Activated B cell treated with CpG ODN at 0.5 μM for 24 hours (primary cell): ENCODE measurements at regions of chr15 and their contacts with region 1.

Region 1: DNA sequence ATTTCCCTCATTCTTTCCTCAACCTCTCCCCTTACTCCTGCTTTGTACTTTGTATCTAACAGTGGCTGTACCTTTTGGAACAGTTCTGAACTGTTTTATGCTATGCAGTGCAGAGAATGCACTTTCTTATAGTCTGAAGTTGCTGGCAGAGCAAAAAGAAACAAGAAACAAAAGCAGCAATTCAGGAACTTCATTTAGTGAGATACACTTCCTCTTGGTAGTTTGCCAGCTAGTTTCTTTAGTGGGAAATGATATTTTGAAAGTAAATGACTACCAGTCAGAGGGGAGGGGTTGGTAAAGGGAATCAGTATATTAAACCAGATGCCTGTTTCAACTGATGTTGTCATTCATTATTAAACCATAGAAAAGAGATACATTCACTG is 55.0 kb upstream of the CHD2 start:
- DNase-seq: no peak
- ATAC-seq: peak; percentile 50
- H3K4me3 Mint-ChIP-seq: peak overlapping the region; percentile 73
- H3K27ac Mint-ChIP-seq: peak overlapping the region; percentile 95
- H3K4me1 Mint-ChIP-seq: peaks cover 71% of the 10 kb centered on the region
- H3K27me3 Mint-ChIP-seq: no peaks in the 10 kb centered on the region
- CTCF ChIP-seq: no peak

Region 2: GRCh38 chr15:92820236-92821021 is 24.7 kb before region 1 on chr15:
- CTCF ChIA-PET with region 1: no interaction called
- POLR2A ChIA-PET with region 1: interaction called, 34 read pairs
- intact Hi-C with region 1: loop called (anchors 1 kb)
- DNase-seq: peak; percentile 82
- ATAC-seq: peak; percentile 79
- H3K4me3 Mint-ChIP-seq: peak overlapping the region; percentile 90
- H3K27ac Mint-ChIP-seq: peak overlapping the region; percentile 90
- H3K4me1 Mint-ChIP-seq: peaks cover 62% of the 10 kb centered on the region
- H3K27me3 Mint-ChIP-seq: no peaks in the 10 kb centered on the region
- CTCF ChIP-seq: no peak

Region 3: DNA sequence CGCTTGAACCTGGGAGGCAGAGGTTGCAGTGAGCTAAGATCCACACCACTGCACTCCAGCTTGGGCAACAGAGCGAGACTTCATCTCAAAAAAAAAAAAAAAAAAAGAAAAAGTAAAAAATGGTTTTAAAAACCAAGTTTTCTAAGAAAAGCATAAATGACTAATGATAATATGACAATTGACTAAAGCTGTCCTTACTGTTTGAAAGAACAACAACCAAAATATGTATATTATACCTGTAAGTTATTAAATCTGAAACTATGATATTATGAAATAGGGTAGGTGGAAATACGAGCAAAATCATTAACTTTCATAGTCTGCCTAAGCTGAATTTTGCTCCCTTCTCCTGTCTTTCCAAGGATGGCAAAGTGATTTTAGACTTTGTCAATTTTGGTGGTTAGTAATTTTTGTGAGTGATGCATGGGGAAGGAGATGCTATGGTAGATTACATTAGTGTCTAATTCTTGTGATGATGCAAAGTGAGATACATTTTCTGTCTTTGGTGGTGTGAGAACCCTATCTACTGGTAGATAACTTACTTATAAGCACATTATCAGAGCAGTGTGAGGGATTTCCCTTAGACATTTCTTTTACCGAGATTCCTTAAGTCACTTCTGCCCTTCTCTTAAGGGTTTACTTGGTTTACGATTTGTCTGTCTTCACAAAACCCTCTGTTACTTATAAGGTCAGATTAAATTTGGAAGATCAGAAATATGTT is 44.4 kb after region 1 on chr15:
- CTCF ChIA-PET with region 1: no interaction called
- POLR2A ChIA-PET with region 1: interaction called, 15 read pairs
- intact Hi-C with region 1: no loop called
- DNase-seq: no peak
- ATAC-seq: no peak
- H3K4me3 Mint-ChIP-seq: peak overlapping the region; percentile 13
- H3K27ac Mint-ChIP-seq: peak overlapping the region; percentile 59
- H3K4me1 Mint-ChIP-seq: peaks cover 62% of the 10 kb centered on the region
- H3K27me3 Mint-ChIP-seq: no peaks in the 10 kb centered on the region
- CTCF ChIP-seq: no peak

Region 4: DNA sequence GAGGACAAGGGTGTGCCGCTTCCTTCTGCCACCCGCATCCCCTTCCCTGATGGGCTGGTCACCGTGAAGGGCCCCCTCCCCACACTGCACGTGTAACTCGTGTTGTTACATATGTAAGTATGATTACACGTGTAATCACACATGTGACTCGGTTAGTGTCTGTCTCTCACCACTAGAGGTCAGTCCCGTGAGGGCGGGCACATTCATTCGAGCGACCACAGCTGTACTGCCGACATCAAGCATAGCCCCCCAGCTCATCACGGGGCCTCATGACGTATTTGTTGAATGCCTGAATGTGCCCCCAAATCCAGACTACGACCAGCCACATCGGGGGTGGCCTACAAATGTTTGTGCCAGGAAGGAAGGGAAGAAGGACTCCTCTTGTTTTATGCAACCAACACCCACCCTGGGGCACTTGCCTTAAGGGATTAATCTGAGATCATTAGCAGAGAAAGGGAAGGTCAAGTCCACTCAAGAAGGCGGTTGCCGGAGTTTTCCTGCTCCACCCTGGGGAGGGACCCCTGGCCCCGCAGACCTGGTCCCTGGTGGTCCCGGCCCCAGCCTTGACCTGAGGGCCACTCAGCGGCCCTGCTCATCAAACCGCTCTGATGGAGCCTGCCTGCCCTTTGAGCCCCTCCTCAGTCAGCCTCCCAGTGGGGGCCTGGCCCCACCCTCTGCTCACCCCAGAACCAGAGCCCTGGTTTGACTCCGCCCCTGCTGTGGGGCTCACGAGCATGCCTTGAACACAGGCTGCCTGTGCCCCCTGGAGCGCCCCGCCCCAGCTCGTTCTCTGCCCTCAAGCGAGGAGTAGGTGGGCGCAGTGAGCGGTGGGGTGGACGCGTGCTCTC is 191.1 kb after region 1 on chr15:
- CTCF ChIA-PET with region 1: no interaction called
- POLR2A ChIA-PET with region 1: no interaction called
- intact Hi-C with region 1: no loop called
- DNase-seq: no peak
- ATAC-seq: peak; percentile 80
- H3K4me3 Mint-ChIP-seq: peak overlapping the region; percentile 60
- H3K27ac Mint-ChIP-seq: no peak overlapping the region
- H3K4me1 Mint-ChIP-seq: peaks cover 2% of the 10 kb centered on the region
- H3K27me3 Mint-ChIP-seq: peaks cover 3% of the 10 kb centered on the region
- CTCF ChIP-seq: no peak

Region 5: GRCh38 chr15:93378558-93378957 is 533.4 kb after region 1 on chr15:
- CTCF ChIA-PET with region 1: no interaction called
- POLR2A ChIA-PET with region 1: no interaction called
- intact Hi-C with region 1: no loop called
- DNase-seq: no peak
- ATAC-seq: no peak
- H3K4me3 Mint-ChIP-seq: no peak overlapping the region
- H3K27ac Mint-ChIP-seq: no peak overlapping the region
- H3K4me1 Mint-ChIP-seq: no peaks in the 10 kb centered on the region
- H3K27me3 Mint-ChIP-seq: peaks cover 2% of the 10 kb centered on the region
- CTCF ChIP-seq: no peak